ENCODE measurements at regions of chr3 and their contacts with region 1.

Region 1: DNA sequence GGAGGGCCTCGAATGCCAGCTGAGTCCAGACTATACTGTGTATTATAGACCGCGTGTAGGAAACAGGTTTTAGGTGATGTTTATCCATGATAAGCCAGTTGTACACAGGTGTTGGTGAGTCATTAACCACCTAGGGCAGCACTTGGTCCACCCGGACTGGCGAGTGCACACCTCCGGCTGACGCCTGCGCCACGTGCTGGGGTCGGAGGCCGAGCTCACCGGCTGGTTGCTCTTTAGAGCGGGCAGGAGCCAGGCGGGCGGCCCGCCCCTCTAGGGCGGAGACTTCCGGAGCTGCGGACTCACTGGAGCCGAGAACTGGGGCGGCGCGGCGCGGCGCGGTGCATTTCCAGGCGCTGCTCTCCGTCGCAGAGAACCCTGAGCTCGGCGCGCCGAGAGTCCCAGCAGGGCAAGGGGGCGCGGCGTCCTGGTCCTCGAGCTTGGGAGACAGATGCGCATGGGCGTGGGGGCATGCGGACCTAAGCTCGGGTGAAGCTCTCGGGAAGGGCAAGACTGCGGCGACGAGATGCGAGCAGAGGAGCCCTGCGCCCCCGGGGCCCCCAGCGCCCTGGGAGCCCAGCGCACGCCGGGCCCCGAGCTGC is at the start of gene ESYT3:
- DNase-seq: peak; percentile 57 to 69
- ATAC-seq: peak; percentile 79 to 92 (median 90)
- H3K4me3 ChIP-seq: peak within 1 kb of the TSS; percentile 43 to 65 (median 56)
- H3K27ac ChIP-seq: no peak within 1 kb of the TSS
- H3K4me1 ChIP-seq: peaks cover 0 to 20% (median 17%) of the 10 kb centered on the region in 9 donors
- H3K27me3 ChIP-seq: peaks cover 0 to 60% (median 37%) of the 10 kb centered on the region in 7 donors
- CTCF ChIP-seq: no peak
- total RNA-seq, gene ESYT3: 0.82 to 2.4 (median 1.2) TPM

Region 2: DNA sequence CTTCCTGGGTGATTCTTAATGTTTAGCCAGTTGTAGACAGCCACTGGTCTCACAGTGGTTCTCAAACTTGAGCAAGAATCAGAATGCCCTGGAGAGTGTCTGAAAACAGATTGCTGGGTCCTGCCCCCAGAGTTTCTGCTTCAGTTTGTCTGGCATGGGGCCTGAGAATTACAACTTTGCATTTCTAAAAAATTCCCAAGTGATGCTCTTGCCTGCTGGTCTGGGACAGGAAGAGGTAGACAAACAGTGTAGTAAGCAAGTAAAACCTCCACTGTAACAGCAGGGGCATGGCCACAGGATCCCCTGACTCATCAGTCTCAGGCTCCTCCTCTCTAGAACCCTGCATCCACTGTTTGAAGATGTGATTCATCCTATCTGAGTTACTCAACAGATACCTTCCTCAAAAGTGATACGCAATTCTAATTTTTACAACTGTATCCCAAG is 355.5 kb before region 1 on chr3:
- intact Hi-C with region 1: loop called in 1 of 10 experiments (anchors 10 kb)
- DNase-seq: no peak
- ATAC-seq: peak in 2 of 8 donors; percentile 19 to 65
- H3K4me3 ChIP-seq: no peak overlapping the region
- H3K27ac ChIP-seq: no peak overlapping the region
- H3K4me1 ChIP-seq: peaks cover 0 to 35% (median 0%) of the 10 kb centered on the region in 9 donors
- H3K27me3 ChIP-seq: no peaks in the 10 kb centered on the region
- CTCF ChIP-seq: no peak

Measured in heart right ventricle (tissue), 16 donors.